Aorta (tissue), 5 donors: ENCODE measurements at regions of chr3 and their contacts with region 1.

Region 1: GRCh38 chr3:107676469-107677309 is 153.9 kb downstream of the BBX start:
- DNase-seq: no peak
- ATAC-seq: no peak
- H3K4me3 ChIP-seq: no peak overlapping the region
- H3K27ac ChIP-seq: no peak overlapping the region
- H3K4me1 ChIP-seq: peaks cover 7% of the 10 kb centered on the region in 2 donors
- H3K27me3 ChIP-seq: no peaks in the 10 kb centered on the region

Region 2: GRCh38 chr3:107740992-107741896 is 64.6 kb after region 1 on chr3:
- intact Hi-C with region 1: loop called (anchors 2 to 5 kb)
- DNase-seq: no peak
- ATAC-seq: peak; percentile 41
- H3K4me3 ChIP-seq: no peak overlapping the region
- H3K27ac ChIP-seq: no peak overlapping the region
- H3K4me1 ChIP-seq: no peaks in the 10 kb centered on the region
- H3K27me3 ChIP-seq: no peaks in the 10 kb centered on the region

Region 3: DNA sequence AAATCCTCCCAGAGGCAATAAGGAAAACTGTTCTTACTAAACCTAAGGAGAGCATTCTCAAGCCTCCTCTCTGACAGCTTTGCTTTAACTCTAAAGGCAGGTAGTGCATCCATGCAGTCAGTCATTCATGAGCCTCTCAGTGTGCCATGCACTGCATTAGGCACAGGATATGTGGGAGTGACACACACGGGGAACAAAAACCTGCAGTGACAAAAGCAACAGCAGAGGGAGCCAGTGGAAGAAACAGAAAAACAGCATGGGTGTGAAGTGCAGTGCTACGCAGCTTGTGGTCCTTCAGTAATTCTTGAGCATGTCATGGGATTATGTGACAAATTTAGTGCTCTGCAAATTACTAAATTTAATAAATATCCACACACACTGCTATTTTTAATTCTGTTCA is 76.8 kb after region 1 on chr3:
- intact Hi-C with region 1: no loop called
- DNase-seq: no peak
- ATAC-seq: peak; percentile 78
- H3K4me3 ChIP-seq: no peak overlapping the region
- H3K27ac ChIP-seq: no peak overlapping the region
- H3K4me1 ChIP-seq: no peaks in the 10 kb centered on the region
- H3K27me3 ChIP-seq: no peaks in the 10 kb centered on the region

Region 4: GRCh38 chr3:107794664-107795443 is 118.2 kb after region 1 on chr3:
- intact Hi-C with region 1: loop called in 1 of 2 experiments (anchors 5 kb)
- DNase-seq: no peak
- ATAC-seq: peak; percentile 83
- H3K4me3 ChIP-seq: no peak overlapping the region
- H3K27ac ChIP-seq: peak overlapping the region; percentile 22 to 83
- H3K4me1 ChIP-seq: peaks cover 1 to 14% of the 10 kb centered on the region in 2 donors
- H3K27me3 ChIP-seq: no peaks in the 10 kb centered on the region

Region 5: GRCh38 chr3:107846279-107846852 is 169.7 kb after region 1 on chr3:
- intact Hi-C with region 1: loop called in 1 of 2 experiments (anchors 5 kb)
- DNase-seq: peak; percentile 78 to 91
- ATAC-seq: peak; percentile 83
- H3K4me3 ChIP-seq: no peak overlapping the region
- H3K27ac ChIP-seq: no peak overlapping the region
- H3K4me1 ChIP-seq: peaks cover 0 to 4% of the 10 kb centered on the region in 2 donors
- H3K27me3 ChIP-seq: no peaks in the 10 kb centered on the region